Heart right ventricle (tissue), 16 donors: ENCODE measurements at regions of chr5 and their contacts with region 1.

Region 1: DNA sequence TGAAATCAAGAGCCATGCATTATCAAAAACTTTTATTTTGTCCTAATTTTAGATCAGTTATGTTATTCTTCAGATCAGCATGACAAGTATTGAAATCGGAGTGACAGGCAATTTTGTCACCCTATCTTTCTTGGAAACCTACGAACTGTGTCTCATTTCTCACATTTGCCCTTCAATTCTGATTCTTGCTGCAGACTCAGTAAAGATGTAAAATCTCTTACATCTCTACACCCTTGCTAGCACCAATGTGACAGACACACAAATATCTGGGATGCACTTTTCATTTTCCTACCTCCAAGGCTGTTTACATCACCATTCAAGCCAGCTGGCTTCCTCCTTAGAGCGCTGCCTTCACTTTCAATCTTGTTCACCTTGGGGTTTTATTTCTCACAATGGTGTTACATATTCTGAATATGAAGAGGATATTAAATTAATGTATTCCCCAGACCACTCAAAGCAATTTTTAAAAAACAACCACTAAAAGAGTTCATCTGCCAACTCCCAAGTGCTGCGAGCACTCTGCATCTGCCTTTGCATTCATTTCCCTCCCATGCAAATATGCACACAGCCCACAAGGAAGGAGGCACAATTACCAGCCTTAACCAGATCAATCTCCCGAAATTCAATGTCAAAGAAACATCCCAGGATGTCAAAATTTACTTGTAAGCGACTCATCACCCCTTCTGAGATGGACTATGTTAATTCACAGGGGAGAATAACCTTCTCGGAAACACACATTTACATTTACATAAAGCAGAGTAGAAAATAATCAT is 164.3 kb downstream of the ENC1 start:
- DNase-seq: no peak
- ATAC-seq: no peak
- H3K4me3 ChIP-seq: no peak overlapping the region
- H3K27ac ChIP-seq: no peak overlapping the region
- H3K4me1 ChIP-seq: peaks cover 0 to 3% (median 0%) of the 10 kb centered on the region in 9 donors
- H3K27me3 ChIP-seq: peaks cover 0 to 7% (median 0%) of the 10 kb centered on the region in 7 donors
- CTCF ChIP-seq: no peak

Region 2: DNA sequence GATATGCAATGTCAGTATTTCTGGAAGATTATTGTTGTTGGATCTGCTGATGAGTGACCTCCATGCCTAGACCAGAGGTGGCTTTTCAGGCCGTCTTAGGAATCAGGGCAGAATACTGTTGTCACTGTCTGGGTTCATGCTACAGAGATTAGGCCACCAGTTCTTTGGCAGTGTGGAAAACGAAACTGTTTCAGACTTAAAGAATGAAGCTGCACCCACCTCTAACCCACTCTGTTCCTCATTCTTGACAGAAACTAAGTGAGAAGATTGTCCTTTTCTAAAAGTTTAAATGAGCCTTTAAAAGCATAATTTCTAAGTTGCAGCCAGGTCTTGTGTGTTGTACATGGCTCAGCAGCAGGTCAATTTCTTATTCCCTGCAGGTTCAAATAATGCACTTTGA is 280.0 kb before region 1 on chr5:
- intact Hi-C with region 1: no loop called
- DNase-seq: no peak
- ATAC-seq: no peak
- H3K4me3 ChIP-seq: no peak overlapping the region
- H3K27ac ChIP-seq: no peak overlapping the region
- H3K4me1 ChIP-seq: peaks cover 4 to 33% (median 14%) of the 10 kb centered on the region in 9 donors
- H3K27me3 ChIP-seq: no peaks in the 10 kb centered on the region
- CTCF ChIP-seq: no peak

Region 3: GRCh38 chr5:74543156-74543995 is 67.1 kb after region 1 on chr5:
- intact Hi-C with region 1: loop called in 1 of 10 experiments (anchors 10 kb)
- DNase-seq: no peak
- ATAC-seq: peak in 2 of 8 donors; percentile 13 to 28
- H3K4me3 ChIP-seq: no peak overlapping the region
- H3K27ac ChIP-seq: peak overlapping the region in 1 of 10 donors; percentile 60
- H3K4me1 ChIP-seq: peaks cover 0 to 27% (median 16%) of the 10 kb centered on the region in 9 donors
- H3K27me3 ChIP-seq: peaks cover 0 to 8% (median 0%) of the 10 kb centered on the region in 7 donors
- CTCF ChIP-seq: no peak

Region 4: DNA sequence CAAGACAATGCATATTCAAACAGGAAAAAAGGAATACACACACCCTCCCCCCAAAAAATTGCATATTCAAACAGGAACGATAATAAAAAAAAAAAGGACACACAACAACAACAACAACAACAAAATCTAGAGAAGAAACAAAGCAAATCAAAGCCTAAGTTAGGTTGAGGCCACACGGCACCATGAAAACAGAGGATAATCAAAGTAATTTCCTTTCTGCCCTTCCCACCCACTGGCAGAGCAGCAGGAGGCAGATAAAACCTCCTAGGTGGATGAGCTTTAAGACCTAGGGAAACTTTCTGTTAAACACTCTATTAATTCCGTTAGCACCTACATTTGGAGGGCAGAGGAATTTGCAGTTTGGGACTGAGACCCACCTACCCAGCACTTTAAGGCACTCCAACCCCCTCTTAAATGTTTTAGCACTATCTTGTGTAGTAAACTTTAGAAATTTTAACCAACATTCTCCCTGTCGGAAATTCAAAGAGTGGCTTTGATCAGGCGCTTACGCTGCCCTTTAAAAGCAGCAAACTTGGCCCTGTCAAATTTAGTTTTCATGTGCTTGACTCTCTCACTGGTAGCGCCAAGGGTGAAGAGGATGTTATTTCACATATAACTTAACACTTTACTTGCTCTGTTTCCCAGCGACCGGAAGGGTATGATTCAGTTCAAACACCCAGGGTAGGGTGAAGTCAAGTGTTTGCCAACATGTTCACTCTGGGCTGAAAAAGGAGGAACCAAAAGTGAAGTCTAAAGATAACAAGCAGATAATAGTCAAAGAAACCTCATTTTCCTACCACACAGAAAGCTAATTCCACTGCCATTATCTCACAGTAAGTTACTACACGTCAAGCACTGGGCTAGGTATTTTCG is 155.1 kb after region 1 on chr5:
- intact Hi-C with region 1: no loop called
- DNase-seq: no peak
- ATAC-seq: peak in 5 of 8 donors; percentile 41 to 70 (median 53)
- H3K4me3 ChIP-seq: no peak overlapping the region
- H3K27ac ChIP-seq: peak overlapping the region in 3 of 10 donors; percentile 1 to 79 (median 38)
- H3K4me1 ChIP-seq: peaks cover 0 to 57% (median 29%) of the 10 kb centered on the region in 9 donors
- H3K27me3 ChIP-seq: no peaks in the 10 kb centered on the region
- CTCF ChIP-seq: no peak